ENCODE measurements at regions of chr14 and their contacts with region 1.

Region 1: GRCh38 chr14:99628832-99629618 is 15.9 kb upstream of the HHIPL1 start:
- DNase-seq: peak; percentile 76
- H3K4me3 ChIP-seq: no peak overlapping the region
- H3K27ac ChIP-seq: no peak overlapping the region
- H3K4me1 ChIP-seq: peaks cover 7% of the 10 kb centered on the region
- H3K27me3 ChIP-seq: no peaks in the 10 kb centered on the region
- CTCF ChIP-seq: peak; percentile 99

Region 2: DNA sequence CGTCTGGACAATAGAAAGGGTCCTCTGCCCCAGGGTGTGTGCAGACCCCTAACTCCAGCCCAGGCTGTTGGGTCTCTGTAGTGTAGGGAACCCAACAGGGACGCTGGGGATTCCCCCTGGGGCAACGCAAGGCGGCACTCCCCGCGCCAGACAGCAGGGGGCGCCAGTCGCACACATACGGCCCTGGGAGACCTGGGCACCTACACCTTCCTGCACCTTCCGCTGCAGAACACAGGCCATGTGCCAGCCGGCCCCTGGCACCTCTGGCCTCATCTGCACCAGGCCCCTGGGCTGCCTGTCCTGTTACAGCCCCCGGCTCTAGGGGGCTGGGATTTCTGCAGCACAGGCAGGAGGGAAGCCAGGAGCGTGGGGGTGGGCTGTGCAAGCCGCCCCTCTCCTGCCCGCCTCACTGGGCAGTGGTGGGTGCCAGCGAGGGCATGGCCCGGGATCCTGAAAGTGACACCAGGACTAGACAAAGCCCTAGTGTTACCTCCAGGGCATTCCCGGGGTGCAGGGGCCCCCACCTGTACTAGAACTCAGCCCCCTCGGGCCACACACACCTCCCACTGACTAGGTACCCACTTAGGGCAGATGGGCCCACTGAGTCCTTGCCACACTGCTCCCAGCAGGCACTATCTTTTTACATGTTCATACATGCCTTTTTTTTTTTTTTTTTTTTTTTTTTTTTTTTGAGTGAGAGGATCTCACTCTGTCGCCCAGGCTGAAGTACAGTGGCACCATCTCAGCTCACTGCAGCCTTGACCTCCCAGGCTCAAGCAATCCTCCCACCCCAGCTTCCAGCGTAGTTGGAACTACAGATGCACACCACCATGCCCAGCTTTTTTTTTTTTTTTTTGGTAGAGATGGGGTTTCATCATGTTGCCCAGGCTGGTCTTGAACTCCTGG is 110.3 kb before region 1 on chr14:
- intact Hi-C with region 1: loop called (anchors 2 kb)
- DNase-seq: peak; percentile 72
- H3K4me3 ChIP-seq: no peak overlapping the region
- H3K27ac ChIP-seq: no peak overlapping the region
- H3K4me1 ChIP-seq: peaks cover 34% of the 10 kb centered on the region
- H3K27me3 ChIP-seq: no peaks in the 10 kb centered on the region
- CTCF ChIP-seq: peak; percentile 98

Measured in left ventricle myocardium inferior (tissue), 1 donor.